Caco-2 (cell line): ENCODE measurements at regions of chr19 and their contacts with region 1.

Region 1: GRCh38 chr19:12365236-12366162 is at the start of gene ZNF442:
- DNase-seq: peak; percentile 92 to 96
- H3K4me3 ChIP-seq: peak within 1 kb of the TSS; percentile 73
- H3K4me3 Mint-ChIP-seq: peak within 1 kb of the TSS; percentile 95
- H3K27ac Mint-ChIP-seq: peak within 1 kb of the TSS; percentile 93
- H3K4me1 ChIP-seq: no peaks in the 10 kb centered on the region
- H3K4me1 Mint-ChIP-seq: no peaks in the 10 kb centered on the region
- H3K27me3 ChIP-seq: no peaks in the 10 kb centered on the region
- H3K27me3 Mint-ChIP-seq: no peaks in the 10 kb centered on the region
- CTCF ChIP-seq: peak; percentile 42 to 65
- total RNA-seq, gene ZNF442: 1.9 and 3.1 TPM in 2 replicates

Region 2: GRCh38 chr19:12294249-12295158 is 71.0 kb before region 1 on chr19 and contains the start of gene ZNF44:
- CTCF ChIA-PET with region 1: interaction called, 5 read pairs
- POLR2A ChIA-PET with region 1: no interaction called
- intact Hi-C with region 1: loop called (anchors 2 kb)
- DNase-seq: peak; percentile 96 to 98
- H3K4me3 ChIP-seq: peak within 1 kb of the TSS; percentile 69
- H3K4me3 Mint-ChIP-seq: peak within 1 kb of the TSS; percentile 97
- H3K27ac Mint-ChIP-seq: peak within 1 kb of the TSS; percentile 98
- H3K4me1 ChIP-seq: peaks cover 5% of the 10 kb centered on the region; the same call in 1 of the 2 replicates
- H3K4me1 Mint-ChIP-seq: no peaks in the 10 kb centered on the region
- H3K27me3 ChIP-seq: no peaks in the 10 kb centered on the region
- H3K27me3 Mint-ChIP-seq: no peaks in the 10 kb centered on the region
- CTCF ChIP-seq: no peak
- total RNA-seq, gene ZNF44: 6.7 and 8.0 TPM in 2 replicates

Region 3: GRCh38 chr19:12333162-12334159 is 32.0 kb before region 1 on chr19 and contains the start of gene ZNF563:
- CTCF ChIA-PET with region 1: interaction called, 4 read pairs
- POLR2A ChIA-PET with region 1: interaction called, 18 read pairs
- intact Hi-C with region 1: loop called (anchors 1 kb)
- DNase-seq: peak; percentile 95
- H3K4me3 ChIP-seq: peak within 1 kb of the TSS; percentile 87
- H3K4me3 Mint-ChIP-seq: peak within 1 kb of the TSS; percentile 92
- H3K27ac Mint-ChIP-seq: peak within 1 kb of the TSS; percentile 92
- H3K4me1 ChIP-seq: peaks cover 14% of the 10 kb centered on the region
- H3K4me1 Mint-ChIP-seq: peaks cover 9% of the 10 kb centered on the region
- H3K27me3 ChIP-seq: no peaks in the 10 kb centered on the region
- H3K27me3 Mint-ChIP-seq: no peaks in the 10 kb centered on the region
- CTCF ChIP-seq: no peak
- total RNA-seq, gene ZNF563: 3.0 and 3.4 TPM in 2 replicates

Region 4: DNA sequence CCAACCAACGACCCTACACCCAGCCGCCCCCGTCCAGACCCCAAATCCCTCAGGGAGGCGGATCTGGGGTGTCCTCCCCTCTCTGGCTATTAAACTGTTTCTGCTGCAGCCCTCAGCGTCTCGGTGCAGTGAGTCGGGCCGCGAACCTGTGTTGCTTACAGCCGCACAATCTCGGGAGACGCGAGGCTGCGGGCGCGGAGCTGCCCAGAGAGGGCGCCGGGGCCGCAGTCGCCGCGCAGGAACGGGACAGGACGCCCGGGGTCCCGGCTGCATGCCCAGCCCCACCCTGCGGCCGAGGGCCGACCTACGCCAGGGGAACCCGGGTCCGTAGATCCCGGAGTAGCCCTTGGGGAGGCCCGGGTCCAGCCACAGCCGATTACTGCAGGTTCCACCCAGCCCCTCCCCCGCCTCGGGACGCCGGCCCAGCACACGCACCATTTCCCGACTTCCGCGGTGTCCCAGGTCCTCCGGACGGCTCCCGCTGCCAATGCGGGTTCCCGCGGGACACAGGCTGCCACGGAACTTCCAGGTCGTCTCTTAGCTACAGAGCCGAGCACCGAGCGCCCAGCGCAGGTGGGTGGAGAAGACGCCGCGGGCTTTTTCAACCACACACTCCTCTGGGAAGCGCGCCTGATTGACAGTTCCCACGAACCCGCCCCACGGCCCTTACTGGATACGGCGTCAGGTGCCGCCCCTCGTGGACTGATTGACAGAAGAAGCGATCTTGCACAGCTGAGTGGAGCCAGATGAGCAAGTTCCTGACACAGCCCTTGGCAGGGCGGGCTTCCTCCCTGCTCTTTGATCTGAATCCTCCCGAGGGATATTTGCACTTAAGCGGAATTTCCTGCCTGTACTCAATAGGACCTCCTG is 35.4 kb after region 1 on chr19 and contains the start of gene ZNF799:
- CTCF ChIA-PET with region 1: no interaction called
- POLR2A ChIA-PET with region 1: interaction called, 11 read pairs
- intact Hi-C with region 1: no loop called
- DNase-seq: peak; percentile 96 to 98
- H3K4me3 ChIP-seq: peak within 1 kb of the TSS; percentile 53
- H3K4me3 Mint-ChIP-seq: peak within 1 kb of the TSS; percentile 94
- H3K27ac Mint-ChIP-seq: peak within 1 kb of the TSS; percentile 94
- H3K4me1 ChIP-seq: no peaks in the 10 kb centered on the region
- H3K4me1 Mint-ChIP-seq: no peaks in the 10 kb centered on the region
- H3K27me3 ChIP-seq: no peaks in the 10 kb centered on the region
- H3K27me3 Mint-ChIP-seq: no peaks in the 10 kb centered on the region
- CTCF ChIP-seq: no peak
- total RNA-seq, gene ZNF799: 7.4 and 8.0 TPM in 2 replicates

Region 5: GRCh38 chr19:12440541-12441316 is 75.2 kb after region 1 on chr19 and contains the start of gene ZNF443:
- CTCF ChIA-PET with region 1: no interaction called
- POLR2A ChIA-PET with region 1: no interaction called
- intact Hi-C with region 1: loop called (anchors 1 kb)
- DNase-seq: peak; percentile 99
- H3K4me3 ChIP-seq: peak within 1 kb of the TSS; percentile 80
- H3K4me3 Mint-ChIP-seq: peak within 1 kb of the TSS; percentile 99
- H3K27ac Mint-ChIP-seq: peak within 1 kb of the TSS; percentile 97
- H3K4me1 ChIP-seq: no peaks in the 10 kb centered on the region
- H3K4me1 Mint-ChIP-seq: no peaks in the 10 kb centered on the region
- H3K27me3 ChIP-seq: no peaks in the 10 kb centered on the region
- H3K27me3 Mint-ChIP-seq: no peaks in the 10 kb centered on the region
- CTCF ChIP-seq: no peak
- total RNA-seq, gene ZNF443: 5.1 and 6.1 TPM in 2 replicates